AG04449 (cell line): ENCODE measurements at regions of chr20 and their contacts with region 1.

Region 1: DNA sequence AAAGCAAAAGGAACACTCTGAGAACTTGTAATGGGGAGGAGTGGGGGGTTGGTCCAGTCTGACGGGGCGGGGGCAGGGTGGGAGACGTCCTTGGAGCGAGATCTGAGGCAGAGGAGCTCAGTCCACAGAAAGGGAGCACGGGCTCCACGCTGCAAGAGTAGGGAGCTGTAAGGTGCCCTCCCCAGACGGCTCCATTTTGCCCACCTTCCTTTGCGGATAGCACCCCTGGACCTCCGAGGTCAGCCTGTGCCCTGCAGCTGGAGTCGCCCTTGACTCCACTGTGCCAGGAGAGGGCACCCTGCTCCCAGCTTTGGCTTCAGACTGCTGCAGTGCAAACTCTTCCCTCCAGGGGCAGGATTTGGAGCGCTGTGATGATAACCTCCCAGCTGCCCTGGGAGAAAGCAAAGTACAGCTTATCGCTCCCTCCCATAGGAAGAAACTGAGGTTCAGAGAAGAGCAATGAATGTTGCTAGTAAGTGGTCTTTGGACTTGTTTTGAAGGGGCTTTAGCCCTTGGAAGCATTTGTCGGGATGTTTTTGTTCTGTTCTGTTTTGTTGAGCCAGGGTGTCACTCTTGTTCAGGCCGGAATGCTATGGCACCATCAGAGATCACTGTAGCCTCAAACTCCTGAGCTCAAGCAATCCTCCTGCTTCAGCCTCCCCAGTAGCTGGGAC is 9.5 kb upstream of the AHCY start:
- DNase-seq: no peak
- H3K4me3 ChIP-seq: peak overlapping the region; percentile 51
- CTCF ChIP-seq: peak; percentile 100

Region 2: GRCh38 chr20:34171640-34172039 is 141.0 kb before region 1 on chr20:
- CTCF ChIA-PET with region 1: no interaction called
- POLR2A ChIA-PET with region 1: no interaction called
- DNase-seq: no peak
- H3K4me3 ChIP-seq: no peak overlapping the region
- CTCF ChIP-seq: no peak

Region 3: GRCh38 chr20:34283844-34284243 is 28.8 kb before region 1 on chr20:
- CTCF ChIA-PET with region 1: no interaction called
- POLR2A ChIA-PET with region 1: no interaction called
- DNase-seq: no peak
- H3K4me3 ChIP-seq: no peak overlapping the region
- CTCF ChIP-seq: no peak

Region 4: GRCh38 chr20:34334654-34335407 is 22.1 kb after region 1 on chr20:
- CTCF ChIA-PET with region 1: interaction called, 16 read pairs
- POLR2A ChIA-PET with region 1: no interaction called
- DNase-seq: no peak
- H3K4me3 ChIP-seq: no peak overlapping the region
- CTCF ChIP-seq: no peak

Region 5: GRCh38 chr20:34415079-34415478 is 102.4 kb after region 1 on chr20:
- CTCF ChIA-PET with region 1: interaction called, 42 read pairs
- POLR2A ChIA-PET with region 1: no interaction called
- DNase-seq: no peak
- H3K4me3 ChIP-seq: no peak overlapping the region
- CTCF ChIP-seq: no peak

Region 6: DNA sequence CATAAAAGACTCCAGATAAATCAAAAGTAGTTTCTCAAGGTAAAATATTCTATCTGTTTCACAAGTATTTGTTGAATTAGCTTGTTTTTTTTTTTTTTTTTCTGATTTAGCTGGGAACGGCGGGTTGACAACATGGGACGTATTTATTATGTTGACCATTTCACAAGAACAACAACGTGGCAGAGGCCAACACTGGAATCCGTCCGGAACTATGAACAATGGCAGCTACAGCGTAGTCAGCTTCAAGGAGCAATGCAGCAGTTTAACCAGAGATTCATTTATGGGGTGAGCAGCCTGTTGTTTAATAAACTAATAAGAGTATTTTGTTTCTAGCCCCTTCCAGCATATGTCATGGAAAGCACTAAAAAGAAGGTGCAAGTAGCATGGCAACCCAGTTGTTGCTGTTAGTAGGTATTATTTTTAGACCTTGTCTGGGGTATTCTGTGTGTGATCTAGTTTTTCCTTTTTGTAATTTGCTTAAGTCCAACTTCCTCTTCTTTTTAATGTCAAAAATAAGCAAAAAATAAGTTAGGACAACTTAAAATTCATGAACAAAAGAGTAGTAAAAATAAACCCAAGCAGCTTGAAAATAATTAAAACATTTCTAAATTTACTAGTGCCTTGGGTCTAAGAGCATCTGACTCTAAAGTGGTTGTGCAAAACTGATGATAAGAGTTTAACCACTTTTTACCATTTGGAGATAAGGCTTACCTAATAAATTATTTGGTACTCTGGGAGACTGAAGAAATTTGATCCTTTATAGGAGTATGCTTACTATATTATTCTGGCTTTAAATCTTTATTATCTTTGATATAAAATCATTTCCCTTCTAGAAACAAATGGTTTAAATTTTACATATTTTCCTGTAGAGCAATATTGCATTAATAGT is 132.7 kb after region 1 on chr20:
- CTCF ChIA-PET with region 1: interaction called, 46 read pairs
- POLR2A ChIA-PET with region 1: no interaction called
- DNase-seq: no peak
- H3K4me3 ChIP-seq: no peak overlapping the region
- CTCF ChIP-seq: no peak

Region 7: DNA sequence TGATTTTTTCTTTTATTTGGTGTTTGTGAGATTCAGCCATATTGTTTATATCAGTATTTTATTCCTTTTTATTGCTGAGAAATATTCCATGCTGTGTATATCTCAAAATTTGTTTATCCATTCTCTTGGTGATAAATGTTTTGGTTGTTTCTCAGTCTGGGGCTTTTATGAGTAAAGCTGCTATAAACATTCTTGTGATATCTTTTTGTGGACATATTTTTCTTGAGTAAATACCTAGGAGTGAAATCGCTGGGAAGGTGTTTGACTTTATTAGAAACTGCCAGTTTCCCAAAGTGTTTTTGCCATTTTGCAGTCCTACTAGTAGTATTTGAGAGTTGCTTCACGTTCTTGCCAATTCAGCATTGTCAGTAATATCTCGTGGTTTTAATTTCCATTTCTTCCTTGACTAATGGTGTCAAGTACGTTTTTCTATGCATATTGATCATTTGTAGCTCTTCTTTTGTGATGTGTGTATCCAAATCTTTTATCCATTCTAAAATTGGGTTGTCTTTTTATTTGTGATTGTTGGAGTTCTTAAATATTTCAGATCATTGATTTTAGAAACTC is 172.5 kb after region 1 on chr20:
- CTCF ChIA-PET with region 1: interaction called, 19 read pairs
- POLR2A ChIA-PET with region 1: no interaction called
- DNase-seq: no peak
- H3K4me3 ChIP-seq: no peak overlapping the region
- CTCF ChIP-seq: no peak

Region 8: GRCh38 chr20:34528921-34529297 is 216.2 kb after region 1 on chr20:
- CTCF ChIA-PET with region 1: interaction called, 99 read pairs
- POLR2A ChIA-PET with region 1: interaction called, 4 read pairs
- DNase-seq: no peak
- H3K4me3 ChIP-seq: no peak overlapping the region
- CTCF ChIP-seq: no peak

Region 9: GRCh38 chr20:34704177-34705007 is 391.7 kb after region 1 on chr20 and contains the start of gene TP53INP2:
- CTCF ChIA-PET with region 1: interaction called, 32 read pairs
- POLR2A ChIA-PET with region 1: no interaction called
- DNase-seq: peak; percentile 45
- H3K4me3 ChIP-seq: peak within 1 kb of the TSS; percentile 81
- CTCF ChIP-seq: no peak